Ovary (tissue), 10 donors: ENCODE measurements at regions of chr5 and their contacts with region 1.

Region 1: GRCh38 chr5:65102828-65103711 is 334.3 kb downstream of the CWC27 start:
- DNase-seq: peak; percentile 58 to 79 (median 66)
- H3K4me3 ChIP-seq: peak overlapping the region; percentile 44
- H3K27ac ChIP-seq: peak overlapping the region; percentile 65 to 80
- H3K4me1 ChIP-seq: peaks cover 6% of the 10 kb centered on the region
- H3K27me3 ChIP-seq: no peaks in the 10 kb centered on the region
- CTCF ChIP-seq: peak; percentile 12 to 34 (median 24)
- EP300 ChIP-seq: no peak
- POLR2A ChIP-seq: no peak

Region 2: DNA sequence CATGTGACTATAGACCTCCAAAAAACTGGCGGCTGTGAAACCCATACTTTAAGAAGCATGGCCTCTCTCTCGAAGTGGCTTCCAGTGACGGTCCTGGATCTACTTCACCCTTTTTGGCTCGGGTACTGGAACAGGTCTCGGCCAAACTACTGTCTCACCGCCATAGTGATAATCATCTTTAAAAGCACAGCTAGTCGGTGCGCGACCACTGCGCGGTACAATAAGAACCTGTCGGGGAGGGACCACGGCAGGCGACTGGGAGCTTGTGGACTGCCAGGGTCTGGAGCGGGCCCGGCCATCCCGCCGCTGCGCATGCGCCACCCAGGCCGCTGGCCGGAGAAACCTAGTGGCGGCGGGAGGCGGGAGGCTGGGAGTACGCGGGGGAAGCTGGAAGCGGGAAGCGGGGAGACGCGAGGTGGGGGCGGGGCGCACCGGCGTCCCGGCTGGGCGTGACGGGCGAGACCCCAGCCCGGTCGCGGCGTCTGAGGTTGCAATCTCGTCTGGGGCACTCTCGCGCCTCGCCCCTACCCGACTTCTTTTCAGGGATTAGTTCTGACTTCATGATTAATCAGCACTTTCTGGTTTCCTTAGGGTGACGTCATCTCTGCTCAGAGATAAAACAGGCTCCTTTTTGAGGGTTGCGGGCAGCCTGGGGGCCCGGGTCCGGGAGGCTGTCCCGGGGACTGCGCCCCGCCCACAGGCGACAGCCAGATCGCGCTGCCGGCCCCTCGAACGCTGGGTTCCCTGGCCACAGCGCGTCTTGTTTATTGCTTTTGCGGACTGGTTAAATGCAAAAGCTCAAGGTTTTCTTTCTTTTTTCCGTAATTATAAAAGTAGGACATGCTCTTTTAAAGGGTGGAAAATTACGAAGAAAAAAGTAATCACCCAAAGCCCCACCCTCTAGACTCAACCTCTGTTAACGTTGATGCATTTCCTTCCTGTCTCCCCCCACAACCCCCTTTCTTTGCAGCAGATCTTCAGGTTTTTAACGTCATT is 67.6 kb before region 1 on chr5:
- intact Hi-C with region 1: loop called in 1 of 4 experiments (anchors 2 kb)
- DNase-seq: peak; percentile 91 to 94 (median 93)
- H3K4me3 ChIP-seq: peak overlapping the region; percentile 69
- H3K27ac ChIP-seq: peak overlapping the region; percentile 92 to 94
- H3K4me1 ChIP-seq: peaks cover 5% of the 10 kb centered on the region
- H3K27me3 ChIP-seq: no peaks in the 10 kb centered on the region
- CTCF ChIP-seq: peak in 1 of 3 donors; percentile 36
- EP300 ChIP-seq: no peak
- POLR2A ChIP-seq: peak; percentile 50

Region 3: GRCh38 chr5:65338606-65339151 is 235.6 kb after region 1 on chr5:
- intact Hi-C with region 1: no loop called
- DNase-seq: no peak
- H3K4me3 ChIP-seq: no peak overlapping the region
- H3K27ac ChIP-seq: no peak overlapping the region
- H3K4me1 ChIP-seq: no peaks in the 10 kb centered on the region
- H3K27me3 ChIP-seq: no peaks in the 10 kb centered on the region
- CTCF ChIP-seq: no peak
- EP300 ChIP-seq: no peak
- POLR2A ChIP-seq: no peak